Sciatic nerve (tissue), 2 donors: ENCODE measurements at regions of chr7 and their contacts with region 1.

Region 1: DNA sequence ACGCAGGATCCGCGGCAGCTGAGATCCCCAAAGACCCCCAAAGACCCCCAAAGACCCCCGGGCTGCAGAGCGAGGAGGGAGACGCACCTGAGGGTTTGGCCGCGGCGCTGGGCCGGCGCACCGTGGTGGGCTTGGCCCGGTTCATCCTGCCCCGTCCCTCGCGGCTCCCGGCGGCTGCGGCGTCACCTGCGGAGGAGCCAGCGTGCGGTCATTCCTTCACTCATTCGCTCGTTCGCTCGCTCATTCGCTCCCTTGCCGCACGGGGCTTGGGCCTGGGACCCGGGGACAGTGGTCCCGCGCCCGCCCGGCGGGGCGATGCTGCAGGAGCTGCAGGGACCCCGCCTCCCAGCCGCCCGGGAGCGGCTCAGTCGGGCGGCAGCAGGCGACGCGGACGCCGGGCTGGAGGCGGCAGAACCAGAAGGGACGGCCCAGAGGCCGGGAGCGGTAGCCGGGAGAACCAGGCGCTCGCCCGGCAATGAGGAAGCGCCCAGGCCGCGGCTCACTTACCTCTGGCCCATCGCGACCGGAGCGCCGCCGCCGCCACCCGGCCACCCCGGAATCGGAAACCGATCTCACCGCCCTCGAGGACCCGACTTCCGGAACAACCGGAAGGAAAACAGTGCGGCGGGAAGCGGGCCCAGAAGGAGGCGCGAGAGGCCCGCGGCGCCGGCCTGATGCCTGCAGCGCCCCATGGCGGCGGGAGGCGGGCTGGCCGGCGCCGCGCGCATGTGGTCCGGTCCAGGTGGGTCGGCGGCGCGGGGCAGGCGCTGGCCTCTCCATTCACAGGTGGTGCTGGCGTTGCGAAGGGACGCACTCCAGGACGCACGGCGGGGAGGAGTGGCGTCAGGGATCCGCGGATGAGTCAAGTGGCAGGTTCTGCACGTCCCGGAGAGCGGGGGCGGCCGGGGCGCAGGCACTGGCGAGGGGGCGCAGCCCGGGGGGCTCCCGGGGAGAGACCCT is at the start of gene INTS1:
- DNase-seq: peak; percentile 95
- ATAC-seq: peak; percentile 94
- total RNA-seq, gene INTS1: 78.4 TPM

Region 2: GRCh38 chr7:1569833-1570633 is 65.9 kb after region 1 on chr7 and contains the start of gene PSMG3:
- intact Hi-C with region 1: loop called (anchors 10 kb)
- DNase-seq: peak; percentile 95
- ATAC-seq: peak; percentile 95
- total RNA-seq, gene PSMG3: 17.5 TPM